Sciatic nerve (tissue), 2 donors: ENCODE measurements at regions of chr10 and their contacts with region 1.

Region 1: DNA sequence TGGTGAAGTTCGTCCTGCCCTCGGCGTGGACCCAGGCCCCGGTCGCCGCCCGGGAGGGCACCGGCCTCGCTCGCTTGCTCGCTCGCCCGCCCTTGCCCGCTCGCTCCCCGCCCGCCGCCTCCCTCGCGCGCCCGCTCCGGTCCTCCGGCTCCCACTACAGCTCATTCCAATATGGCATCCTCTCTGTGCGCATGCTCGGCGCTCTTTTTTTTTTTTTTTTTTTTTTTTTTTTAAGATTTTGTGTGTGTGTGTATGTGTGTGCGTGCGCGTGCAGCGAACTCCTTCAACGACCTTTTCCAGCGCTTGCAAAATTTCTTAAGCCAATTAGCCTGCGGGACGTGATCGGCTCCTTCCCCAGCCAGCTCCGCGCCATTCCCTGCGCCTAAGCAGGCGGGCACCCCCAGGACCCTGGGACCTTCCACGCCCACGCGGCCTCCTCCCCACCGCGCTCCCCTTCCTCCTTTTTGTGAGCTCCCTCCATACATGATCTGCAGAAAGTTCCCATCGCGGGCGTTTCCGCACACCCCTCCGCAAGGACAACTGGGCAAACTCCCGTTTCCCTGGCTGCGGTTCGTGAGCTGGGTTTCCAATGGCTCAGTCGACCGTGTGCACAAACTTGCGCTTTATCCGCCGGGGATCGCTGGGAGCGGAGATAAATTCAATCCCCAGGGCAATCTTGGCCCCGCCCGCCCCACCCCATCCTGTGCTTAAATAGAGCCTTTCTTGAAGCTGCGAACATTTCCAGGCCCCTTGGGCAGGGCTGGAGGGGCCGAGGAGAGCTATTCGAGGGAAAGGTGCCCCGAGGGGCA is at the start of gene SFMBT2:
- DNase-seq: peak; percentile 78
- ATAC-seq: peak; percentile 69
- total RNA-seq, gene SFMBT2: 14.6 TPM

Region 2: DNA sequence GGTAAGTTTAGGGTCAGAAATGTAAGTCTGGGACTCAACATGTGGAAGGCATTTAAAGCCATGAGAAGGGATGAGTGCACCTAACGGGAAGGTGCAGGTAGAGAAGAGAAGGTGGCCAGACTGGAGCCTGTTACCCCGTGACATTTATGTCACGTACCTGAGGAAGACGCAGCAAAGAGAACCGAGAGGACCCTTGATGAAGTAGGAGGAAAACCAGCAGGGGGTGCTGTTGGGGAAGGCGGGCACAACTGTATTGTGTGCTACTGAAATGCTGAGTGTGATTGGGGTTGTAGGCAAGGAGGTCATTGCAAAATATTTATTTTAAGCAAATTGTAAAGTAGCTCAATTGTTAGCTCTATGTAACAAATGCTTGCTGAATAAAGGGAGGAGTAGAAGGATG is 492.8 kb before region 1 on chr10:
- intact Hi-C with region 1: loop called (anchors 10 kb)
- DNase-seq: peak; percentile 75
- ATAC-seq: no peak

Region 3: DNA sequence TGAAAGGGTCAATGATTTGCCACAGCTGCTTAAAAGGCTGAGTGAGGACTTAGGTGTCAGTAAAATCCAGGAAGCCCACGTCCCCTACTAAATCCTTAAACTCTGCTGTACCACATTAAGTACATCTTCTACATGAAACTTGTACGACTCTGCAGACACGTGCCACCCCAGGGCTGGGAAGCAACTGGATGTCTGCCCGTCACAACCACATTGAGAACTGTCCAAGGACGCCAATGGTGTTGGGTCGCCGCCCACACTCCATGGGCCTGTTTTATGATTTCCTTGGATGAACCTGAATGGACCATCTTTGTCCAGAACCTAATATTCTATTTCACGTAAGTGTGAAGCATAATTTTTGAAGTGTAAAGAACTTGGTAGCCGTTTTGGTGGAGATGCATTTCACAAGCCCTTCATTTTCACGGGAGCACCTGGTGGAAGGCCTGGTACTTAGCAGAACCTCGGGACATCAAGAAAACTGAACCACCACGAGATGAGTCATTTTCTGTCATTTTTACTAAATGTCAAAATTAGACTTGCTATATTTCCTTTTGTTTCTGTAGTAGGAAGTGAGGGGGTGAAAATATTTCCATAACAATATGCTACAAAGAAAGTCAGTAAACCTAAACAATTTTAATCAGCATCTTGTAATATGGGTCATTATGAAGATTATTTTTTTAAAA is 135.2 kb before region 1 on chr10:
- intact Hi-C with region 1: loop called (anchors 10 kb)
- DNase-seq: no peak
- ATAC-seq: no peak